Mammary epithelial cell (primary cell): ENCODE measurements at regions of chr17 and their contacts with region 1.

Region 1: DNA sequence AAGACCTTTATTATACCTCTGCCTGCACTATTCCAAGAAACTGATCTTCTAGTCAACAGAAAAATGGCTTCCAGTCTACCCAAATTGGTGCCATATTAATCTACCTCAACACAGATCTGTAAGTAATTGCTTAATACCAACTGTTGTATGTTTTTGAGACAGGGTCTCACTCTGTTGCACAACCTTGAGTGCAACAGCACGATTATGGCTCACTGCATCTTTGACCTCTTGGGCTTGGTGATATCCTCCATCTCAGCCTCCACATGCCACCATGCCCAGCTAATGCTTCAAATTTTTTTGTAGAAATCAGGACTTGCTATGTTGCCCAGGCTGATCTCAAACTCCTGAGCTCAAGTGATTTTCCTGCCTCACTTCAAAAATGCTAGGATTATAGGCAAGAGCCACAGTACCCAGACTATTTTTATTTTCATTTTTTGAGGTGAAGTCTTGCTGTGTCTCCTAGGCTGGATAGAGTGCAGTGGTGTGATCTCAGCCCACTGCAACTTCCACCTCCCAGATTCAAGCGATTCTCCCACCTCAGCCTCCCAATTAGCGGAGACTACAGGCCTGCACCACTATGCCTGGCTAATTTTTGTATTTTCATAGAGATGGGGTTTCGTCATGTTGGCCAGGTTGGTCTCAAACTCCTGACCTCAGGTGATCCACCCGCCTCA is 14.4 kb downstream of the NUFIP2 start:
- DNase-seq: no peak
- H3K4me3 ChIP-seq: no peak overlapping the region
- H3K27ac ChIP-seq: no peak overlapping the region
- H3K4me1 ChIP-seq: peaks cover 8% of the 10 kb centered on the region
- H3K27me3 ChIP-seq: no peaks in the 10 kb centered on the region
- CTCF ChIP-seq: no peak

Region 2: GRCh38 chr17:29102060-29102459 is 177.5 kb before region 1 on chr17:
- CTCF ChIA-PET with region 1: no interaction called
- dilution Hi-C with region 1: no loop called
- in situ Hi-C with region 1: no loop called
- intact Hi-C with region 1: no loop called
- DNase-seq: no peak
- H3K4me3 ChIP-seq: no peak overlapping the region
- H3K27ac ChIP-seq: peak overlapping the region; percentile 24
- H3K4me1 ChIP-seq: peaks cover 24% of the 10 kb centered on the region
- H3K27me3 ChIP-seq: no peaks in the 10 kb centered on the region
- CTCF ChIP-seq: no peak

Region 3: DNA sequence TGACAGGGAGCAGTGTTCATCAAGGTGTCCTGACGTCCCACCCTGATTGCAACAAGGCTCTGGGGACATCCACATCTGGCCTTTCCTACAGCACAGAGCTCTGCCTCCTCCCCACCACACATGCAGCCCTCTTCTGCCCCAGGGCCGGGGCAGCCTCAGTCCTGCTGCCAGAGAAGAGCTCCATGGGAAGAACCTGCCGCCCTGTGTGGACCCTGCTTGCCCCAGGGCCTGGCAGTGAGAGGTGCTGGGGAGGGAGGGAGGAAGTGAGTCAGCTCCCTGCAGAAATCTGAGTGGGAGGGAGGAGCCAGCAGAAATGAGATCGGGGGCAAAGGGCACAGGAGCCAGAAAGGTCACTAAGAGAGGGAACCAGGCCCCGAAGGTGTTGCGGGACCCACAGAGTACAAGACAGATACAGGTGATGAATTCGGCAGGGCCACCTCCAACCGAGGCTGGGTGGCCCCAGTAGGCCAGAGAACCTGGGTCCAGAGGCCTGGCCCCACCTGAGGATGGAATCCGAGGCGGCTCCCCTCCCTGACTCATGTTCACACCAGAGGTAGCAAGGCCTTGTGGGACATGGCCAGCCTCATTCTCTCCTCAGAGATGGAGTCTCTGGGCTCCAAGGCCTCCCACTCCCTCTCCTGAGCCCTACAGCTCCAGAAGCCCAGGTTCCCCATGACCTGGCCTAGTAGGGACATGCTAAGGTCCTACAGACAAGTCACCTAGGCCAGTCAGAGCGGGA is 124.1 kb before region 1 on chr17:
- CTCF ChIA-PET with region 1: no interaction called
- dilution Hi-C with region 1: loop called (anchors 5 kb)
- in situ Hi-C with region 1: no loop called
- intact Hi-C with region 1: no loop called
- DNase-seq: peak; percentile 85
- H3K4me3 ChIP-seq: no peak overlapping the region
- H3K27ac ChIP-seq: peak overlapping the region; percentile 81
- H3K4me1 ChIP-seq: peaks cover 92% of the 10 kb centered on the region
- H3K27me3 ChIP-seq: no peaks in the 10 kb centered on the region
- CTCF ChIP-seq: no peak

Region 4: DNA sequence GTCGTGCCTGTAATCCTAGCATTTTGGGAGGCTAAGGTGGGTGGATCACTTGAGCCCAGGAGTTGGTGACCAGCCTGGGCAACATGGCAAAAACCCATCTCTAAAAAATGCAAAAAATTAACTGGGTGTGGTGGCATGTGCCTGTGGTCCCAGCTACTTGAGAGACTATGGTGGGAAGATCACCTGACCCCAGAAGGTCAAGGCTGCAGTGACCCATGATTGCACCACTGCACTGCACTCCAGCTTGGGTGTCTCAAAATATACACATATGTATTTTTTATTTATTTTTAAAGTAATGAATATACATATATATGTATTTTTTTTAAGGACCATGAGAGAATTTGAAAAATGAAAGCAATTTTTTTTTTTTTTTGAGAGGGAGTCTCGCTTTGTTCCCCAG is 19.5 kb after region 1 on chr17:
- CTCF ChIA-PET with region 1: no interaction called
- dilution Hi-C with region 1: no loop called
- in situ Hi-C with region 1: no loop called
- intact Hi-C with region 1: no loop called
- DNase-seq: no peak
- H3K4me3 ChIP-seq: no peak overlapping the region
- H3K27ac ChIP-seq: no peak overlapping the region
- H3K4me1 ChIP-seq: no peaks in the 10 kb centered on the region
- H3K27me3 ChIP-seq: no peaks in the 10 kb centered on the region
- CTCF ChIP-seq: no peak

Region 5: GRCh38 chr17:29322363-29322762 is 42.8 kb after region 1 on chr17:
- CTCF ChIA-PET with region 1: no interaction called
- dilution Hi-C with region 1: no loop called
- in situ Hi-C with region 1: no loop called
- intact Hi-C with region 1: no loop called
- DNase-seq: no peak
- H3K4me3 ChIP-seq: no peak overlapping the region
- H3K27ac ChIP-seq: no peak overlapping the region
- H3K4me1 ChIP-seq: no peaks in the 10 kb centered on the region
- H3K27me3 ChIP-seq: no peaks in the 10 kb centered on the region
- CTCF ChIP-seq: no peak